Mammary epithelial cell (primary cell): ENCODE measurements at regions of chr7 and their contacts with region 1.

Region 1: DNA sequence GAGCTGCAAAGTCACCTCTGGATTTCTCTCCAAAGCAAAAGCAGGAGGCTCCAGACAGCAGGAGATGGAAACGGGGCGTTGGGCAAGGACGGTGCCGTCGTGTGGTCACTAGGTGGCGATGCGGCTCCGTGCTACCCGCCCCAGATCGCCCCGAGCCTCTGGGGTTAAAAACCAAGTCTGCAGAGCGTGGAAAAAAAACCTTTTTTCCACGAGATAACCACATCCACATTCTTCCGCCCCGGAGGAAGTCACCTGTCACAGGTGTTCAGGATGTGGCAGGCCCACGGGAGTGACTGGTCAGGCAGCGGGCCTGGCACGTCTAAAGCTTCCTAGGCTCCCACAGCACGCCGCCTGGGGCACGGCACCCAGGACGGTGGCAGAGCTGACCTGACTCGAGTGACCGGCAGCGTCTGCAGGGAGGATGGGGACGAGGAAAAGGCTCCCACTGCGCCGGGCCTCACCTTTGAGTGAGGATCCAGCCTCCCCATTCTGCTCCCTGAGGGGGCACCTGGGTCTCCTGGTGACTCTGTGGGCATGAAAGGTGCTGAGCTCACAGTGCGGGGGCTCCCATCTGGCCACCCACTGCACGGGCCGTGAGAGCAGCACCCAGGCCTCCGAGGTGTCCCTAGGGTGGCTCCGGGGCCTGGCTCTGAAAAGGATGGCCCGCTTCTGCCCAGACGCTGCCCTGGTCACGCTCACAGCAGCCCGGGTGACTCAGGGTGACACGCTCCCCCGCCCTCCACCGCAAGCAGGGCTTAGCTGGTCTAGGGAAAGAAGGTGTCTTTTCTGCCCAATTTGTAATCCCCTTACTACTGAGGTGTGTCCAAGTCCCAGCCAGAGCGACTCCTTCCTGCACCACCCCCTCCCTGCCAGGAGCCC is 71.3 kb upstream of the TNRC18 start:
- DNase-seq: peak; percentile 76
- H3K4me3 ChIP-seq: peak overlapping the region in 2 of 3 experiments; percentile 15 to 23
- H3K27ac ChIP-seq: peak overlapping the region; percentile 16
- H3K4me1 ChIP-seq: peaks cover 21% of the 10 kb centered on the region
- H3K27me3 ChIP-seq: no peaks in the 10 kb centered on the region
- CTCF ChIP-seq: peak; percentile 91 to 96

Region 2: DNA sequence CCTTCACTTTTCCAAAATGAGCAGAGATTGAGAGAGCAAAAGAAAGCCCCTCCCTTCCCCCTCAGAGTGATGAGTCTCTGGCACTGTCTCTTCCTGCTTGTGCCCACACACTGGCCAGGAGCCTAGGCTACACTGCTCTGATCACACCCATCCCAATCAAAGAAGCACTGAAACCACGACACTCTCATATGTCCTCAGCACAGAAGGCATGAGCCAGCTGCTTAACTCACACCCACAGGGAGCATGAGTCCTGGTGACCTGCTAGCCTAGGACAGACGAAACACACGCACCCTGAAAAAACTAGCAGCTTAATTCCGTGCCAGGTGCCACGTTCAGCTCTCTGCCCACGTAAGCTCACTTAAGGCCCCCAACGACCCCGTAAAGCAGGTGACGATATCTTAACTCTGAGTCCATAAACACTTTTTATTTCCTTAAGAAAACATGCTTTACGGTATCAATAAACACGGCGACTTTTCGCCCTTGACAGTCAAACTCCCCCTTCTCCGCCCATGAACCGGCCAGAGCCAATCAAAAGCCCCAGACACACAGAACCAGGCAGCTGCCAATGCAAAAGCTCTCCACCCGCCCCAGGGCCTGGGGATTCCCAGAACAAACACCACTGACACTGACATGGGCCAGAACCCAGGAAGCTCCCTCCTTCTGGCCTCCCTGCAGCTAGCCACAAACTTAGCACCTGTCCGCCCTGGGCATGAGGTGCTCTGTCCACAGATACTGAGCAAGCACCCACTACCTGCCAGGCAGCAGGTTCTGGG is 140.3 kb before region 1 on chr7:
- CTCF ChIA-PET with region 1: no interaction called
- dilution Hi-C with region 1: loop called (anchors 10 kb)
- in situ Hi-C with region 1: no loop called
- intact Hi-C with region 1: no loop called
- DNase-seq: peak; percentile 79
- H3K4me3 ChIP-seq: no peak overlapping the region
- H3K27ac ChIP-seq: peak overlapping the region; percentile 1
- H3K4me1 ChIP-seq: peaks cover 14% of the 10 kb centered on the region
- H3K27me3 ChIP-seq: no peaks in the 10 kb centered on the region
- CTCF ChIP-seq: no peak

Region 3: DNA sequence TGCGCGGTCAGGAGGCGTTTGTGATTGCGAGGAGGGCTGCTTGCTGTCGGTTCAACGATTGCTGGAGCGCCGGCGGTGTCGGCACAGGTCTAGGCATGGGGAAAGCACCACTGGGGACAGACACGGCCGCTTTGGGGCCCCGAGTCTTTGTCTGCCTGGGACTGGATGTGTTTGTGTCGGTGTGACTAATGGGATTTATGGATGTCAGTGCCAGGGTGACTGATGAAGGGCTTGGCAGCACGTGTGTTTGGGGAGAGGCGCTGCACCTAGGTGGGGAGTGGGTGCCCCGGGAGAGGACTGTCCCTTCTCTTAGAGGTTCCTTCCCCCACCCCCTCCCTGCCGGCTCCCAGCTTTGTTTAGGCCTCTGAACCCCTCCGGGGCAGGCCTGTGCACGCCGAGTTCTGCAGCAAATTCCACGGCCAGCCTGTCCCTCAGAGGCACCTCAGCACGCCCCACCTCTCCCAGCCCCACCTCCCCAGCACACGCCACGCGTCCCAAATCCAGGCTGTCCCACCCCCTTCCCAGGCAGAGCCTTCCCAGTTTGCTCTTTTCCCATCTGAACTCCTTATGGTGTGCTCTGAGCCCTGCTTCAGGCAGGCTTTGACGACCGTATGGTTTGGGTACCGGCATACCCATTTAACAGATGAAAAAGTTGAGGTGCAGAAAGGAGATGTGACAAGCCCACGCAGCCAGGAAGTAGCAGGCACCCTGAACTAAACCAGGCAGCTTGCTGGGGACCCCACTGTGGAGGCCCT is 64.9 kb before region 1 on chr7:
- CTCF ChIA-PET with region 1: no interaction called
- dilution Hi-C with region 1: loop called (anchors 5 kb)
- in situ Hi-C with region 1: no loop called
- intact Hi-C with region 1: no loop called
- DNase-seq: peak; percentile 83
- H3K4me3 ChIP-seq: peak overlapping the region; percentile 70 to 91 (median 81)
- H3K27ac ChIP-seq: peak overlapping the region; percentile 94
- H3K4me1 ChIP-seq: peaks cover 11% of the 10 kb centered on the region
- H3K27me3 ChIP-seq: no peaks in the 10 kb centered on the region
- CTCF ChIP-seq: no peak

Region 4: GRCh38 chr7:5557920-5558401 is 63.0 kb after region 1 on chr7:
- CTCF ChIA-PET with region 1: interaction called, 7 read pairs
- dilution Hi-C with region 1: no loop called
- in situ Hi-C with region 1: loop called in 1 of 2 experiments (anchors 5 kb)
- intact Hi-C with region 1: loop called (anchors 1 kb)
- DNase-seq: peak; percentile 41
- H3K4me3 ChIP-seq: no peak overlapping the region
- H3K27ac ChIP-seq: peak overlapping the region; percentile 19
- H3K4me1 ChIP-seq: peaks cover 51% of the 10 kb centered on the region
- H3K27me3 ChIP-seq: no peaks in the 10 kb centered on the region
- CTCF ChIP-seq: no peak

Region 5: DNA sequence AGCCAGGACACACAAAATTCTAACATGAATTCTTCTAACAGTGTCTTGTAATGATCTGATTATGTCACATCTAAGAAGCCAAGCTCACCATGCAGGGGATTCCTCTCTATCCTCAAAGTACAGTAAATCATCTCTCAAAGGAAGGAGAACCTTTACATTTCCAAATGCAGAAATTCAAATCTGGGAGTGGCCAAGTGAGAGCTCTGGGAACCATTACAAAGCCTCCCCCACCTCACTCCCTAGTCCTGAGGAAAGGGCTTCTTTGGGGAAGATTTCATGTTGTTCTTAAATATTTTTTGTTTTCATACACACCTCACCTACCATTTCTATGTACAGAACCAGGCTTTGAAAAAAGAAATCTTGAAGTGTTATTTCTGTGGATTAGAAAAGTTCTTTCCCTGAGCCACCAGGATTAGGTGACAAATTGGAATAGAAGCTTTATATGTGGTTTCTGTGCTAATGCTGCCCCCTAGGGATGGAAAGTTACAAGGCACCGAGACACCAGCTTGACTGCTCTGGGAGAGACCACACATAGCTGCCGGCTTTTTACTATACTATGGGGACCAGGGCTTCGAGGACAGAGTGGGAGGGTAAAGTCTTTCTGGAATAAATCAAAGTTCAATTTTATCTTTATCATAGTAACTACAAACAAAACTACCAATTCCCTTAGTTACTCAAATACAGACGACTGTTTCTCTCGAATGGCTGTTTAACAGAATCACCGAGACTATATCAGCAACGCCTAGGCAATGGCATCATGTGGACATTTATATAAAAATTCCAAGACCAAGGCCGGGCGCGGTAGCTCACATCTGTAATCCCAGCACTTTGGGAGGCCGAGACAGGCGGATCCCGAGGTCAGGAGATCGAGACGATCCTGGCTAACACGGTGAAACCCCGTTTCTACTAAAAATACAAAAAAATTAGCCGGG is 170.4 kb after region 1 on chr7:
- CTCF ChIA-PET with region 1: interaction called, 16 read pairs
- dilution Hi-C with region 1: no loop called
- in situ Hi-C with region 1: loop called (anchors 5 to 10 kb)
- intact Hi-C with region 1: loop called (anchors 1 kb)
- DNase-seq: peak; percentile 61
- H3K4me3 ChIP-seq: no peak overlapping the region
- H3K27ac ChIP-seq: no peak overlapping the region
- H3K4me1 ChIP-seq: no peaks in the 10 kb centered on the region
- H3K27me3 ChIP-seq: no peaks in the 10 kb centered on the region
- CTCF ChIP-seq: peak; percentile 87 to 89

Region 6: DNA sequence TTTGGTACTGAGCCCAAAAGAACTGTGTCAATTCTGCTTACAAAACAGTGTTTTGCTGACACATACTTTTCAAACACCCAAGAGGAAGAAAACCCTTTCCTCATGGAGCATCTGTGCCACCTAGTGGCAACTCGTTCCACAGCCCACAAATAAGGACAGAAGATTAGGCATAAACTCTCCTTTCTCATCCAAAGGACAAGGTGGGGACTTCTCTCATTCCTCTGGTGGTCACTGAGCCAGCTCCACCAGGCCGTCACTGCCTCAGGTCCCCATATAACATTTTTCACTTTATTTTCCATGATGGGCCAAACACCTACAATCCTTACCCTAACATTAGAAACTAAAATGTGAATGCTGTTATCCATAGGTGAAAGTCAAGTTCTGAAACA is 209.6 kb after region 1 on chr7:
- CTCF ChIA-PET with region 1: no interaction called
- dilution Hi-C with region 1: no loop called
- in situ Hi-C with region 1: loop called in 1 of 2 experiments (anchors 10 kb)
- intact Hi-C with region 1: loop called (anchors 1 kb)
- DNase-seq: peak; percentile 61
- H3K4me3 ChIP-seq: no peak overlapping the region
- H3K27ac ChIP-seq: no peak overlapping the region
- H3K4me1 ChIP-seq: peaks cover 41% of the 10 kb centered on the region
- H3K27me3 ChIP-seq: no peaks in the 10 kb centered on the region
- CTCF ChIP-seq: peak; percentile 94 to 99